AG04450 (cell line): ENCODE measurements at regions of chr21 and their contacts with region 1.

Region 1: GRCh38 chr21:36113647-36114428 is 21.0 kb upstream of the CBR3 start:
- DNase-seq: no peak
- H3K4me3 ChIP-seq: no peak overlapping the region
- H3K27ac ChIP-seq: no peak overlapping the region
- H3K27me3 ChIP-seq: peaks cover 2% of the 10 kb centered on the region
- CTCF ChIP-seq: no peak

Region 2: DNA sequence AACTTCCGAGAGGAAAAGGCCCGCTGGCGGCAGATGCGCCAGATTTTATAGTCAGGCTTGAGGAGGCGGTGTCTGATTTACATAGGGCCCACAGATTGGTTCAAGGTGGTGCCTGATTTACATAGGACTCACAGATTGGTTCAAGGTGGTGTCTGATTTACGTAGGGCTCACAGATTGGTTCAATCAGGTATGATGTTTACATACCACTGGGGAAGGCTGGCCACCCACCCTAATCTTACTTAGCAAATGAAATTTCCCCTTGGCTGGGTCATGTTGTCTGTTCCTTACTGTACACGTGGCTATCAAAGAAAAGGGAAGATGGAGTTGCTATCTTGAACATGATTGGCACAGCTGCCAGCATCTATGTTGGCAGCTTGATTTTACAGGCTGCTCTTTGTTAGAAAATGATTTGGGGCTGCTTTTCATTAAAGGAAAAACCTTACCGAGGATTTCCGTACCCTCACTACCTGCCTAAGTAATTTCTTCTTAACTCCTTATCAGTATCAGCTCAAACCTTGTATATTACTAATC is 149.9 kb before region 1 on chr21:
- CTCF ChIA-PET with region 1: no interaction called
- POLR2A ChIA-PET with region 1: no interaction called
- DNase-seq: no peak
- H3K4me3 ChIP-seq: no peak overlapping the region
- H3K27ac ChIP-seq: no peak overlapping the region
- H3K27me3 ChIP-seq: peaks cover 17% of the 10 kb centered on the region
- CTCF ChIP-seq: no peak

Region 3: GRCh38 chr21:36097266-36098230 is 16.3 kb before region 1 on chr21:
- CTCF ChIA-PET with region 1: interaction called, 16 read pairs
- POLR2A ChIA-PET with region 1: no interaction called
- DNase-seq: no peak
- H3K4me3 ChIP-seq: no peak overlapping the region
- H3K27ac ChIP-seq: no peak overlapping the region
- H3K27me3 ChIP-seq: peaks cover 5% of the 10 kb centered on the region
- CTCF ChIP-seq: no peak

Region 4: GRCh38 chr21:36125512-36126222 is 11.8 kb after region 1 on chr21:
- CTCF ChIA-PET with region 1: interaction called, 12 read pairs
- POLR2A ChIA-PET with region 1: no interaction called
- DNase-seq: no peak
- H3K4me3 ChIP-seq: no peak overlapping the region
- H3K27ac ChIP-seq: peak overlapping the region; percentile 33
- H3K27me3 ChIP-seq: no peaks in the 10 kb centered on the region
- CTCF ChIP-seq: peak; percentile 91

Region 5: GRCh38 chr21:36288651-36289243 is 174.9 kb after region 1 on chr21:
- CTCF ChIA-PET with region 1: no interaction called
- POLR2A ChIA-PET with region 1: no interaction called
- DNase-seq: no peak
- H3K4me3 ChIP-seq: peak overlapping the region; percentile 44
- H3K27ac ChIP-seq: peak overlapping the region; percentile 84
- H3K27me3 ChIP-seq: no peaks in the 10 kb centered on the region
- CTCF ChIP-seq: no peak